ENCODE measurements at regions of chr6 and their contacts with region 1.

Region 1: GRCh38 chr6:138115877-138116660 is 8.8 kb upstream of the PERP start:
- DNase-seq: peak; percentile 40 to 65
- ATAC-seq: peak; percentile 90 to 94
- H3K4me3 ChIP-seq: no peak overlapping the region
- H3K27ac ChIP-seq: no peak overlapping the region
- H3K4me1 ChIP-seq: no peaks in the 10 kb centered on the region
- CTCF ChIP-seq: peak; percentile 77
- EP300 ChIP-seq: no peak
- POLR2A ChIP-seq: no peak
- RAD21 ChIP-seq: peak; percentile 84 to 87

Region 2: DNA sequence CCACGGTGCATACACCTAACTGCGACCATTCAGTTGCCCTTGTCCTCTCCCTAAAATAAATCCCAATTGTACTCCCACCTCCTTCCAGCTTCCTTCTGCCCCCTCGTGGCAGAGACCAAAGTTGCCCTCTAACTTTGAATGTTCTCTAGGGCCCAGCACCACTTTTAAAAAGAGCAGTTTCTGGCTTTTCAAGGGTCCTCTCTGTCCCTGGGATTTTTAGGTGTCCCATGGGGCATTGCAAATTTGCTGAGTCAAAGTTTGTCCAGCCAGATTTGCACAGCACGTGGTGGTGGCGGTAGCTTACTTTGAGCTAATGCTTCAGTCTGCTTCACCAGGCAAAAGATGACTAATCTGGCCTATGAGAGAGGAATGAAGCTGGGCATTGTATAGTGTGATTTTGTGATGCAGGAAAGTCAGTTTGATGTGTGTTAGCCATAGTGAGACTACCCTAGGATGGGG is 109.0 kb before region 1 on chr6:
- CTCF ChIA-PET with region 1: interaction called, 17 read pairs
- POLR2A ChIA-PET with region 1: no interaction called
- DNase-seq: peak; percentile 38 to 46
- ATAC-seq: peak; percentile 57 to 81; a peak in 4 of 6 replicates
- H3K4me3 ChIP-seq: no peak overlapping the region
- H3K27ac ChIP-seq: peak overlapping the region; percentile 20 to 69; a peak in 5 of 6 replicates
- H3K4me1 ChIP-seq: peaks cover 26% of the 10 kb centered on the region
- CTCF ChIP-seq: peak; percentile 54
- EP300 ChIP-seq: no peak
- POLR2A ChIP-seq: no peak
- RAD21 ChIP-seq: peak; percentile 30 to 34; a peak in 2 of 5 replicates

Region 3: DNA sequence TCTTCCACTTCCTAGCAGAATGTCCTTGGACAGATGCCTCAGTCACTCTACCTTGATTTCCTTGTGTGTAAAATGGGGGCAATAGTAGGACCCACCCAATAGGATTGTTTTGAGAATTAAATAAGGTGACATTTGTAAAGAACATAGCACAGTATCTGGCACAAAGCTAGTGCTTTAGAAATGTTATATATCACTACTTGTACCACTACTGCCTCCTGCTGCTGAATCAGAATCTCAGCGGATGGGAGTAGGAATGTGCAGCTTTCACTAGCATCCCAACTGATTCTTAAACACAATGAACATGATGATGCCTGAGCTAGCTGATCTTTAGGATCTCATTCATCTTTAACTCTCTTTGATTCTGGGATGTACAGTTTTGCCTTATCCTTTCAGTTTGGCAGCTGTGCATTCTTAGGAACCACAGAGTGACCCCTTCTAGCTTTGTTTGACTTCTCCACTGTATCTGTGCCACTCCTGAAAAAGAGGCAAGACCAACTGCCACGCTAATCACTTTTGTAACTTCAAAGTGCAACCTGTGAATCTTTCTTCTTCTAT is 95.0 kb after region 1 on chr6:
- CTCF ChIA-PET with region 1: no interaction called
- POLR2A ChIA-PET with region 1: no interaction called
- DNase-seq: peak in 1 of 2 experiments; percentile 3
- ATAC-seq: no peak
- H3K4me3 ChIP-seq: no peak overlapping the region
- H3K27ac ChIP-seq: no peak overlapping the region
- H3K4me1 ChIP-seq: no peaks in the 10 kb centered on the region
- CTCF ChIP-seq: no peak
- EP300 ChIP-seq: no peak
- POLR2A ChIP-seq: no peak
- RAD21 ChIP-seq: no peak

Region 4: GRCh38 chr6:138403801-138404661 is 288.0 kb after region 1 on chr6 and contains the start of gene HEBP2:
- CTCF ChIA-PET with region 1: interaction called, 19 read pairs
- POLR2A ChIA-PET with region 1: no interaction called
- DNase-seq: peak; percentile 72 to 90
- ATAC-seq: peak; percentile 94
- H3K4me3 ChIP-seq: peak within 1 kb of the TSS; percentile 70
- H3K27ac ChIP-seq: peak within 1 kb of the TSS; percentile 97
- H3K4me1 ChIP-seq: 0 out of 3 replicates have a peak, but pooled peaks cover 6% of the 10 kb centered on the region
- CTCF ChIP-seq: peak; percentile 62
- EP300 ChIP-seq: no peak
- POLR2A ChIP-seq: peak; percentile 25
- RAD21 ChIP-seq: peak; percentile 29 to 59; a peak in 3 of 5 replicates
- polyA plus RNA-seq, gene HEBP2: 12.2 and 22.1 TPM in 2 replicates

Region 5: GRCh38 chr6:138422861-138423260 is 306.8 kb after region 1 on chr6:
- CTCF ChIA-PET with region 1: no interaction called
- POLR2A ChIA-PET with region 1: no interaction called
- DNase-seq: no peak
- ATAC-seq: no peak
- H3K4me3 ChIP-seq: no peak overlapping the region
- H3K27ac ChIP-seq: no peak overlapping the region
- H3K4me1 ChIP-seq: no peaks in the 10 kb centered on the region
- CTCF ChIP-seq: no peak
- EP300 ChIP-seq: no peak
- POLR2A ChIP-seq: no peak
- RAD21 ChIP-seq: no peak

Region 6: GRCh38 chr6:138509371-138509770 is 393.3 kb after region 1 on chr6:
- CTCF ChIA-PET with region 1: interaction called, 13 read pairs
- POLR2A ChIA-PET with region 1: no interaction called
- DNase-seq: peak; percentile 27 to 62
- ATAC-seq: peak; percentile 56 to 80; a peak in 3 of 6 replicates
- H3K4me3 ChIP-seq: no peak overlapping the region
- H3K27ac ChIP-seq: no peak overlapping the region
- H3K4me1 ChIP-seq: peaks cover 30% of the 10 kb centered on the region; the same call in 2 of the 3 replicates
- CTCF ChIP-seq: peak; percentile 67
- EP300 ChIP-seq: no peak
- POLR2A ChIP-seq: no peak
- RAD21 ChIP-seq: peak; percentile 75 to 83

Region 7: DNA sequence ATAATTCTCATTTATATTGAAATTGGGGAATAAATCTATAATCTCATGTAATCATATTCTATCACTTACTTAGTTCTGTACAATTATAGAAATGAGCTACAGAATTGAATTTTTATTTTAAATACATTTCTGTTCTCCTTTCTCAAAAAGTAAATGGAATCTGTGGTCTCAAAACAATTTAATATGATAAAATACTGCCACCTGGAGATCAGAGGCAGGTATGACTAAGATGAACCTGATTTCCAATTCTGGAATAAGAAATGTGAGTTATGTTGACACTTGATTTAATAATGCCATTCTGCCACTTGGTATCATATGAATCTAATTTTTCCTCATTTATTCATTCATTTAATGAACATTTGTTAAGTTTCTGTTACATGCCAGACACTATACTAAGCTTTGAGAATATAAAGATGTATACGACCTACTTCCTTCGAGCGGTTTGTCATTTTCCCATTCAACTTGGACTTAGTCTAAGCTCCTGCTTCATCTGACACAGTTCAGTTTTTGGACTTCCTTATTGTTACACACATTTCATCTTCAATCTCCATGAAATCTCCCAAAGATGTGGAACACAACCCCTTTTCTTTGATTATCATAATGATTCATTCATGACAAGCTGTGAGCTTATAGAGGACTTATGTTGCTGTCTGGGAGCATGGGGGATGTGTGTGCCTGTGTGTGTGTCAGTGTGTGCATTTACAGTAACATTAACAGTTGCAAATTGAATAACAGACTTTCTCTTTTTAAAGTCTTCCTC is 650.0 kb after region 1 on chr6:
- CTCF ChIA-PET with region 1: interaction called, 44 read pairs
- POLR2A ChIA-PET with region 1: no interaction called
- DNase-seq: peak; percentile 28 to 31
- ATAC-seq: no peak
- H3K4me3 ChIP-seq: no peak overlapping the region
- H3K27ac ChIP-seq: no peak overlapping the region
- H3K4me1 ChIP-seq: no peaks in the 10 kb centered on the region
- CTCF ChIP-seq: peak; percentile 66
- EP300 ChIP-seq: no peak
- POLR2A ChIP-seq: no peak
- RAD21 ChIP-seq: peak; percentile 70 to 78

Region 8: DNA sequence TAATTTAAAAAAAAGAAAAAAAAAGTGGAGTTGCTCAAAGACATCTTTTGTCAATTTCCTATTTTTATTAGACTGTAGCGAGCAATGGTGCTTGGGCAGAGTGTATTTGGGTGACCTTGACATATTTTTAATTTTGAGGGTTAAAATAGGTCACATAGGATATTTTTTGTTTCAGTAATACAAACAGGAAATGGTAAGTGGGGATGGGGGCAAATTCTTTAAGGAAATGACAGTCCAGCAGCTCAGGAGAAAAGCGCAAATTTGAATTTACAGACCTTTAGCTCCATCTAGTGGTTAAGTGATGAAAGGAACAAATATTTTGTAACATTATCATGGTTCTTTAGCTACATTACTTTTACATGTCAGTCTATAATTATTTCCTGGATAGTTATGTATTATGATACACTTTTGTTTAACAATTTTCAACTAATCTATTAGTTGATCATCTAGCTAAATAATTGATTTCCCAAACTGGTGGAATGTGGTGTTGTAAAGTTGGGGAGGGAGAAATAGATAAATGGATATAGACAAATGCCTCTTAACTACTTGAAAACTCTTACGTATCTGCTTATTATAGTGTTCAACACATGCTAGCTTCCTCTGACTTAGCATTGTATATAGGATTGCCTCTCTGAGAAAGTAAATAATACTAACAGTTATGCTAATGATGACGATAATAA is 1248.4 kb after region 1 on chr6:
- CTCF ChIA-PET with region 1: interaction called, 13 read pairs
- POLR2A ChIA-PET with region 1: no interaction called
- DNase-seq: peak; percentile 23 to 27
- ATAC-seq: peak in 1 of 2 experiments; percentile 65; a peak in 2 of 6 replicates
- H3K4me3 ChIP-seq: no peak overlapping the region
- H3K27ac ChIP-seq: no peak overlapping the region
- H3K4me1 ChIP-seq: peaks cover 7% of the 10 kb centered on the region; the same call in 2 of the 3 replicates
- CTCF ChIP-seq: peak; percentile 77
- EP300 ChIP-seq: no peak
- POLR2A ChIP-seq: no peak
- RAD21 ChIP-seq: peak; percentile 78 to 86

Measured in A549 (cell line).